CD4-positive, alpha-beta memory T cell (primary cell): ENCODE measurements at regions of chr1 and their contacts with region 1.

Region 1: DNA sequence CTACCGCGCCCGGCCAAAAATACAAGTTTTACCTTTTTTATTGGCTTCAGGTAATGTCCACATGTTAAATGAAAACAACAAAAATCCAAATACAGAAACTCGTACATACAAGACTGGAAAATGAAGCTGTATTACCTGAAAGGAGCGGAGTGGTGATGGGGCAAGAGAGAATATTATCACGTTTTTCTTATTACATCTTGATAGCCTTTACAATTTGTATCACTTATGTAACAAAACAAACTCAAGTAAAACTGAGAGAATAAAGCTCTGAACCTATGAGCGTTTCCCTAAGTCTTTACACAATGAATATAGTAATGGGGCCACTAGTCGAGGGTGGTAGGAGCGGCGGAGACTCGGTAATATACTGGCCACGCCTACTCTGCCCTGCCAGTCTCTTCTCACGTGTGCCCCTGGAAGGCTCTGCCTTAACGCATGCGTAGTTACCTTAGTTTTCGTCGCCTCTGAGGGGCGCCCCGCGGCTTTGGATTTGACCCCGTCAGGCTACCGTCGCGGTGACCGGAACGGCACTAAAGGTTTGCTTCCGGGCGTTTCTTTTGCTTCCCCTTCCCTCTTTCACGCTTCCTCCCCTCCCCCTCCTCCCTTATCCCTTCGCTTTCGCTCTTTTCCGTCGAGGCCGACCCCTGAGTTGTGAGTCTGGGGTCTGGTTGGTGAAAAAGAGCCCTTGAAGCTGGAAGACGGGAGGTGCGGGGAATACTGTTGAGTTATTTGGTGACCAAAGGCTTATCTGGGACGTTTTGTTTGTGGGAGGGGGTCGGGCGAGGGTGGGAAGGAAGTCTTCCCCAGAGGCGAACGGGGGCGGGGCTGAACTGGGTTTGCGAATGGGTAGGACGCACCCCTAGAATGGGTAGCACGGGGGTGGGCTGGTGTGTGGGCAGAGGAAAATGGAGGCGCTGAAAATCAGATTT is at the start of gene SETDB1:
- DNase-seq: peak; percentile 90 to 95 (median 90)
- H3K4me3 ChIP-seq: peak within 1 kb of the TSS; percentile 80 to 97
- H3K4me3 Mint-ChIP-seq: peak within 1 kb of the TSS; percentile 94 to 96 (median 96)
- H3K27ac ChIP-seq: peak within 1 kb of the TSS; percentile 80
- H3K27ac Mint-ChIP-seq: peak within 1 kb of the TSS; percentile 96 to 98 (median 96)
- H3K4me1 ChIP-seq: peaks cover 22% of the 10 kb centered on the region
- H3K4me1 Mint-ChIP-seq: peaks cover 18 to 38% (median 29%) of the 10 kb centered on the region in 4 donors
- H3K27me3 ChIP-seq: no peaks in the 10 kb centered on the region
- H3K27me3 Mint-ChIP-seq: no peaks in the 10 kb centered on the region
- total RNA-seq, gene SETDB1: 71.4 to 72.6 TPM

Region 2: GRCh38 chr1:150149271-150150132 is 776.6 kb before region 1 on chr1 and contains the start of gene PLEKHO1:
- CTCF ChIA-PET with region 1: no interaction called
- POLR2A ChIA-PET with region 1: no interaction called
- intact Hi-C with region 1: no loop called
- DNase-seq: peak; percentile 72 to 92 (median 79)
- H3K4me3 ChIP-seq: peak within 1 kb of the TSS; percentile 77 to 87
- H3K4me3 Mint-ChIP-seq: peak within 1 kb of the TSS; percentile 94 to 99 (median 98)
- H3K27ac ChIP-seq: peak within 1 kb of the TSS; percentile 81
- H3K27ac Mint-ChIP-seq: peak within 1 kb of the TSS; percentile 95 to 99 (median 98)
- H3K4me1 ChIP-seq: peaks cover 52% of the 10 kb centered on the region
- H3K4me1 Mint-ChIP-seq: peaks cover 53 to 83% (median 68%) of the 10 kb centered on the region in 4 donors
- H3K27me3 ChIP-seq: no peaks in the 10 kb centered on the region
- H3K27me3 Mint-ChIP-seq: no peaks in the 10 kb centered on the region
- total RNA-seq, gene PLEKHO1: 154 TPM

Region 3: DNA sequence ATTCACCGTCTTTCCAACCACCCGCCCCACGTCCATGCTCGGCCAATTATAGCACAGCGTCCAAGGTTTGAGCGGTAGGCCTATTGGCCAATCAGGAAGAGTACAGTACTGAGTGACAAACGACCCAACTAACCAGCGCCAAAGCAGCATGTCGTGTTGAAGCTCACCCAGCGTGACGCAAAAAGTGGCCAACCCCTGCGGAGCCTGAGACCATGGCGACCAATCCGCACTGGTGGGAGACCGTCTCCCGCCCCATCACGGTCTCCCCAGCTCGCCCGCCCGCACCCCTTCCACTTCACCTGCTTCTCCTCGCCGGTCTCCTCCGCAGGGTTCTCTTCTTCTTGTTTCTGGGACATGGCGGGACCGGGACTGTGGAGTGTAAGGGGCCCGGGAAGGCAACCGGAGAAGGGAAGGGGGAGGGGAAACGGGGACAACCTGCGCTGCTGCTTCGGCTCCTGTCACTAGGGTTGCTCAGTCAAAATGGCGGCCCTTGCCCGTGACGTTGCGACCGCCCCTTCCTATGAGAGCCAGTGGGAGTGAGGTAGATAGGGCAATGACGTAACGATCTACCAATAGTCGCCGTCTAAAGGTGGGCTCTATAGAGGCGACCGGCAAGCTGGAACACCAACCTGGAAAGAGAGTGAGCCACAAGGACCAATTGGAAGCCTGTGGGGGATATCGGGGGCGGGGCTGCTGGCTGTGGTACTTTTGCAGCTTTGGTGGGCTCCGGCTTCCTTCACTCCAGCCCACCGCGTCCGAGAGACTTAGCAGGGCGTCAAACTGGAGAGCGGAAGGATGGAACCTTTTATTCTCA is 296.8 kb before region 1 on chr1 and contains the start of gene ENSA:
- CTCF ChIA-PET with region 1: interaction called, 3 read pairs
- POLR2A ChIA-PET with region 1: no interaction called
- intact Hi-C with region 1: loop called (anchors 2 kb)
- DNase-seq: peak; percentile 98 to 99 (median 98)
- H3K4me3 ChIP-seq: peak within 1 kb of the TSS; percentile 78 to 80
- H3K4me3 Mint-ChIP-seq: no peak within 1 kb of the TSS
- H3K27ac ChIP-seq: peak within 1 kb of the TSS; percentile 98
- H3K27ac Mint-ChIP-seq: no peak within 1 kb of the TSS
- H3K4me1 ChIP-seq: peaks cover 29% of the 10 kb centered on the region
- H3K4me1 Mint-ChIP-seq: peaks cover 18 to 21% (median 21%) of the 10 kb centered on the region in 4 donors
- H3K27me3 ChIP-seq: no peaks in the 10 kb centered on the region
- H3K27me3 Mint-ChIP-seq: no peaks in the 10 kb centered on the region
- total RNA-seq, gene ENSA: 99.7 to 101 TPM

Region 4: DNA sequence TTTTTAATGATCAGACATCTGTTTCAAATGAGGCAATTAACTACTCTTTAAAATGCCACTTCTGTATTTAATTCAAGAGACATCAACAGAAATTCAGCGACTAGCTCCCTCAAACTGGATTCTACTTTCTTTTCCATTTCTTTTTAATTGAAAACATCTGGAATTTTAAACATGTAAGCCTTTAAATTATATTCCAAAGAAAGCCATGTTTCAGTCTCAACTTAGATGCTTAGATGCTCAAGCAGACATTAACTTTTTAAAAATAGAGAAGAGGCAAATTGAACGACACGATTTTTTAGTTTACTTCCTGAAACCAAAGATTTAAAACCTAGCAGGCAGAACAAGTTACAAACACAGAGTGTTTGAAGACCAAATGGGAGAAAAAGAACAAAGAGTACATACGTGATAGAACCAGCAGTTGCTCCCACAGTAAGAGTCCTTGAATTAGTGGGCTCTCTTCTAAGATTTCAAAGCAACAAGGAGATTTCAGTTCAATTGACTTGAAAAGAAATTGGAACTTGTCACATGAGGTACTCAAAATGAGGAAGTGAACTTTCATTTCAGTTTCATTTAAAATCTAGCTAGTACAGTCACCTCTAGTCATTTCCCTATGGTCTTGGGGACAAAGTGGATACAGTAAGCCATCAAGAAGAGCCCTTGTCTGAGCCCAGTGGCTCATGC is 160.6 kb before region 1 on chr1 and contains the start of gene CTSS:
- CTCF ChIA-PET with region 1: no interaction called
- POLR2A ChIA-PET with region 1: interaction called, 3 read pairs
- intact Hi-C with region 1: loop called (anchors 10 kb)
- DNase-seq: peak in 4 of 5 donors; percentile 34 to 46 (median 38)
- H3K4me3 ChIP-seq: peak within 1 kb of the TSS; percentile 55 to 71
- H3K4me3 Mint-ChIP-seq: peak within 1 kb of the TSS; percentile 89 to 98 (median 93)
- H3K27ac ChIP-seq: peak within 1 kb of the TSS; percentile 51
- H3K27ac Mint-ChIP-seq: peak within 1 kb of the TSS; percentile 87 to 98 (median 95)
- H3K4me1 ChIP-seq: peaks cover 43% of the 10 kb centered on the region
- H3K4me1 Mint-ChIP-seq: peaks cover 29 to 58% (median 42%) of the 10 kb centered on the region in 4 donors
- H3K27me3 ChIP-seq: no peaks in the 10 kb centered on the region
- H3K27me3 Mint-ChIP-seq: no peaks in the 10 kb centered on the region
- total RNA-seq, gene CTSS: 119 TPM

Region 5: DNA sequence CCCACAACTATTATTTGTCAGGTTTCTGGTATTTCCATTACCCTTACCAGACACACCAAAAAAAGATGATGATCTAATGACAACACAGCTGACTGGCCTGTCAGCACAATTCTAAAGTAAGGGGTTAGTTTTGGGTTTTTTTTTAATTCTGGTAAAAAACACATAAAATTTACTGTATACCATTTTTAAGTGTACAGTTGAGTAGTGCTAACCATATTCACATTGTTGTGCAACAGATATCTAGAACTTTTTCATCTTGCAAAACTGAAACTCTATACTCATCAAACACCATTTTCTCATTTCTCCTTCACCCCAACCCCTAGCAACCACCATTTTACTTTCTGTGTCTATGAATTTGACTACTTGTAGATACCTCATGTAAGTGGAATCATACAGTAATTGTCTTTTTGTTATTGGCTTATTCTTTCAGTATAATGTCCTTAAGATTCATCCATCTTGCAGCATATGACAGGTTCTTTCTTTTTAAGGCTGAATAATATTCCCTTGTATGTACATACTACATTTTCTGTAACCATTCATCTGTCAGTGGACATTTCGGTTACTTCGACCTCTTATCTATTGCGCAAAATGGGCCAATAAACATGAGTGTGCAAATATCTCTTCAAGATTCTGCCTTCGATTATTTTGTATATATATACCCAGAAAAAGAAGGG is 79.5 kb before region 1 on chr1:
- CTCF ChIA-PET with region 1: no interaction called
- POLR2A ChIA-PET with region 1: no interaction called
- intact Hi-C with region 1: no loop called
- DNase-seq: no peak
- H3K4me3 ChIP-seq: no peak overlapping the region
- H3K4me3 Mint-ChIP-seq: no peak overlapping the region
- H3K27ac ChIP-seq: no peak overlapping the region
- H3K27ac Mint-ChIP-seq: no peak overlapping the region
- H3K4me1 ChIP-seq: peaks cover 13% of the 10 kb centered on the region
- H3K4me1 Mint-ChIP-seq: peaks cover 9 to 17% (median 16%) of the 10 kb centered on the region in 4 donors
- H3K27me3 ChIP-seq: no peaks in the 10 kb centered on the region
- H3K27me3 Mint-ChIP-seq: no peaks in the 10 kb centered on the region

Region 6: DNA sequence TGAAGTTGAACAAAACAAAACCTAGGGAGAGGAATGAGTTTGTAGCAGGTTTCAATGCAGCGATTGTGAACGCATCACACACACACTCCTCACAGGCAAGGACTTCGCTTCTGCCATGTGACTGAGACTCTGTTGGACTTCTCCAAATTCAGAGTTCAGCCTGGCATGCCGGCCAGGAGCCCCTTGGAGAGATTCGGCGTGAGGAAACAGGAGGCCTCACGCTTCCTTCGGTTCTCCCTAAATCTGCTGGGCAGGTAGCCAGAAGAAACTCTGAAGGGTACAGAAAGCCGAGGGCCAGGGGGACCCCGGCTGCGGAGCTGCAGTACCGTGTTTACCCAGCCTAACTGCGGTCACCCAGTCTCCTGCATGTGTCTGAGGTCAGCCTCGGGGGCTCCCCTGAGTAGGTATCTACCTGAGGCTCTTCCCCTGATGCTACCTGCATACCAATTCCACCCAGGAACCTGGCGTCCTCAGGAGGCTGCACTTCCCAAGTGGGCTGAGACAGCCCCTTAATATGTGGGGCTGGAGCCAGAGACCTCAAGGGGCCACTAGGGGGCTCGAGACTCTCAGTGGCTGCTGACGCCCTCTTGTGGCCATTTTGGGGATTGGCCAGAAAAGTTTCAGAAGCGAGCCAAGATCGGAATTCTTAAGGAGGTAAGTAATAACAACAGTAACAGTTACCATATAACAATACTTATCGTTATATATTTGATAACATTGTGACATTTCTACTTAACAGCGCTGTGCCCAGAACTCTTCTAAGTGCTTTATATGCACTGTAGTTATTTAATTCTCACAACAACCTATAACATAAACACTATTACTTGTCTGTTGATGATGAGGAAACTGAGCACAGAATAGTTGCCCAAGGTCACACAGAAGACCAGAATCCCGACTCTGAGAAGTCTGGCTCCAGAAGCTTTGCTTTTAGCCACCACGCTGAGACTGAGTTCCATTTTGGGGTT is 53.3 kb after region 1 on chr1:
- CTCF ChIA-PET with region 1: interaction called, 7 read pairs
- POLR2A ChIA-PET with region 1: interaction called, 4 read pairs
- intact Hi-C with region 1: loop called (anchors 1 kb)
- DNase-seq: peak; percentile 83 to 87 (median 85)
- H3K4me3 ChIP-seq: peak overlapping the region in 1 of 2 donors; percentile 52
- H3K4me3 Mint-ChIP-seq: peak overlapping the region in 4 of 8 donors; percentile 29 to 59 (median 41)
- H3K27ac ChIP-seq: peak overlapping the region; percentile 11
- H3K27ac Mint-ChIP-seq: peak overlapping the region in 6 of 7 donors; percentile 48 to 83 (median 64)
- H3K4me1 ChIP-seq: peaks cover 39% of the 10 kb centered on the region
- H3K4me1 Mint-ChIP-seq: peaks cover 20 to 44% (median 31%) of the 10 kb centered on the region in 4 donors
- H3K27me3 ChIP-seq: no peaks in the 10 kb centered on the region
- H3K27me3 Mint-ChIP-seq: no peaks in the 10 kb centered on the region

Region 7: DNA sequence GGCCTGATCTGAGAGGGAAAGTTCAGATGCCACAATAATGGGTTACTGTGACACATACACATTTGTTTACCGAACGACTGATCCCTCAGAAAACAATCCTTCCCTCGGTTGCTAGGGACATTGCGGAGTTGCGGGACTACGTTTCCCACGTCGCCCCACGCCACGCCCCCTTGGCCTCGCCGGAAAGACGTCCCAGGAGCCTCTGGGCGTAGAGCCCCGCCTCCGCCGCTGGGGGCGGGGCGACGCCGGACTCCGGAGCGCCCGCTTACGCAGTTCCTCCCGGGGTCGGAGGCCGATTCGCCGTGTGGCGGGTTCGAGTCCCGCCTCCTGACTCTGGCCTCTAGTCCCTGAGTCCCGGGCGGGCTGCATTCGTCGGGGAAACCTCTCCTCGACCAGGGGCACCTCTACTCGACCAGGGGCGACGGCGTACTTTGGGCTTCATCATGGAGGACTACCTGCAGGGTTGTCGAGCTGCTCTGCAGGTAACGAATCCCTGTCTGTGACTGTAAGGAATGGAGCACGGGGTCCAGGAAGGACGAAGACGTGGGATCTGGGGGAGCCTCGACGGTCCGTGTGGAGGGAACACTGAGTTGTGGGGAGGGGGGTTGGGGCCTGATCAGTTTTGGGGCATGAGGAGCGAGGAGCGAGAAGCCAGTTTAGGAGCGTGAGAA is 82.2 kb after region 1 on chr1 and contains the start of gene PRUNE1:
- CTCF ChIA-PET with region 1: interaction called, 4 read pairs
- POLR2A ChIA-PET with region 1: no interaction called
- intact Hi-C with region 1: loop called (anchors 1 kb)
- DNase-seq: peak; percentile 92 to 99 (median 96)
- H3K4me3 ChIP-seq: peak within 1 kb of the TSS; percentile 74 to 92
- H3K4me3 Mint-ChIP-seq: peak within 1 kb of the TSS; percentile 88 to 99 (median 95)
- H3K27ac ChIP-seq: peak within 1 kb of the TSS; percentile 88
- H3K27ac Mint-ChIP-seq: peak within 1 kb of the TSS; percentile 90 to 100 (median 99)
- H3K4me1 ChIP-seq: peaks cover 67% of the 10 kb centered on the region
- H3K4me1 Mint-ChIP-seq: peaks cover 47 to 93% (median 69%) of the 10 kb centered on the region in 4 donors
- H3K27me3 ChIP-seq: no peaks in the 10 kb centered on the region
- H3K27me3 Mint-ChIP-seq: no peaks in the 10 kb centered on the region
- total RNA-seq, gene PRUNE1: 35.0 to 38.9 TPM